Breast epithelium (tissue), 4 donors: ENCODE measurements at regions of chr12 and their contacts with region 1.

Region 1: GRCh38 chr12:96108321-96108720 is 72.9 kb upstream of the LTA4H start:
- DNase-seq: no peak
- H3K4me3 ChIP-seq: no peak overlapping the region
- H3K27ac ChIP-seq: peak overlapping the region in 1 of 2 donors; percentile 14
- H3K4me1 ChIP-seq: no peaks in the 10 kb centered on the region
- H3K27me3 ChIP-seq: no peaks in the 10 kb centered on the region
- CTCF ChIP-seq: no peak
- POLR2A ChIP-seq: no peak

Region 2: GRCh38 chr12:95105540-95105939 is 1002.8 kb before region 1 on chr12:
- intact Hi-C with region 1: loop called (anchors 5 kb)
- DNase-seq: no peak
- H3K4me3 ChIP-seq: no peak overlapping the region
- H3K27ac ChIP-seq: no peak overlapping the region
- H3K4me1 ChIP-seq: no peaks in the 10 kb centered on the region
- H3K27me3 ChIP-seq: no peaks in the 10 kb centered on the region
- CTCF ChIP-seq: no peak
- POLR2A ChIP-seq: no peak

Region 3: DNA sequence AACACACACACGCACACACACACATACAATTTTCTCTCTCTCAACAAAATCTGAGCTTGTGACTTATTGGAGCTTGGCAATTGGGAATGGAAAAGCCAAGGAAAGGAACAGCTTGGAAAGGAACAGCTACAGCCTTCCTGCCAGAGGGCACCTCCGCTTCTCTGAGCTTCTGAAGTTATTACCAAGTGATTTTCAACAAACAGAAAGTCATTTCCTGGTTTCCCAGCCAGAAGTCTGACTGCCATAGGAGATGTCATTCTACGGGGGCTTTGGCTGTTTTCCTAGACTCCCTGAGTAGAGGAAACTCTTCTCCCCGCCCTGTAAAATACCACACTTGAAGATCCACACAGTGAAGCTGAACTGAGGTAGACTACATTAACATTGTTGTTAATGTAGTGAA is 579.4 kb after region 1 on chr12:
- intact Hi-C with region 1: loop called (anchors 5 kb)
- DNase-seq: no peak
- H3K4me3 ChIP-seq: no peak overlapping the region
- H3K27ac ChIP-seq: no peak overlapping the region
- H3K4me1 ChIP-seq: no peaks in the 10 kb centered on the region
- H3K27me3 ChIP-seq: no peaks in the 10 kb centered on the region
- CTCF ChIP-seq: no peak
- POLR2A ChIP-seq: no peak